Naive thymus-derived CD4-positive, alpha-beta T cell (primary cell): ENCODE measurements at regions of chr1 and their contacts with region 1.

Region 1: DNA sequence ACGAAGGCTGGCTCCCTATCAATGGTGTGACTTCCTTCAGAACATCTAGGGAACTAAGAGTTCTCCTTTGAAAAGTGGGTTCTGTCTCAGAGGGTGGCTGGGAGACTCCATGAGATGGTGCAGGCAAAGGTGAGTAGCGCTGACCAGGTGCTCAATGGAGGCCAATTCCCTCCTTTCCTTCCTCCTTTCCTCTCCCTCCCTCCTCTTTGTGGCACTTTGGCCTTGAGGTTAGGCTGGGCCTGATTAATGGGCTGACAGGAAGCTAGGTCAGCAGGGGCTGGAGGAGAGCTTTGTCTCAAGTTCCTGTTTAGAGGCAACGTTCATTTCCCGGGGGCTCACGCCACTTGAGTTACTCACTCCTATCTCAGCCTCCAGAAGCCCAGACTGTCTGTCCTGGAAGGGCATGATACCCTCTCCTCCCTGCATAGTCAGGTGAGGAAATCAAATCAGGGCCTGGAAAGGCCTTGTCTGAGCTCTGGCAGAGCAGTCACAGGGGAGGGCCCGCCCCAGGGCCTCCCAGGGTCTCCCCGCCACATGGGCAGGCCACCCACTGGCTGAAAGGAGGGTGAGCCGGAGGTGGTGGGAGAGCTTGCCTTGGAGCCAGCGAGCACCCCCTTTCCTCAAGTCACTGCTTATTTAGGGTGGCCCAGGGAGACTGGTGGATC is 58.4 kb upstream of the SSBP3 start:
- DNase-seq: no peak
- ATAC-seq: peak; percentile 23
- H3K4me3 ChIP-seq: no peak overlapping the region
- H3K4me3 Mint-ChIP-seq: no peak overlapping the region
- H3K27ac ChIP-seq: no peak overlapping the region
- H3K27ac Mint-ChIP-seq: peak overlapping the region in 2 of 9 donors; percentile 8 to 13
- H3K4me1 ChIP-seq: peaks cover 27 to 31% of the 10 kb centered on the region in 2 donors
- H3K4me1 Mint-ChIP-seq: peaks cover 8 to 51% (median 41%) of the 10 kb centered on the region in 7 donors
- H3K27me3 ChIP-seq: no peaks in the 10 kb centered on the region
- H3K27me3 Mint-ChIP-seq: peaks cover 0 to 4% (median 0%) of the 10 kb centered on the region in 5 donors

Region 2: GRCh38 chr1:54081306-54082270 is 383.0 kb before region 1 on chr1:
- CTCF ChIA-PET with region 1: no interaction called
- POLR2A ChIA-PET with region 1: no interaction called
- intact Hi-C with region 1: no loop called
- DNase-seq: peak; percentile 20 to 50 (median 40)
- ATAC-seq: peak; percentile 89
- H3K4me3 ChIP-seq: no peak overlapping the region
- H3K4me3 Mint-ChIP-seq: no peak overlapping the region
- H3K27ac ChIP-seq: no peak overlapping the region
- H3K27ac Mint-ChIP-seq: peak overlapping the region in 1 of 9 donors; percentile 53
- H3K4me1 ChIP-seq: no peaks in the 10 kb centered on the region
- H3K4me1 Mint-ChIP-seq: peaks cover 3 to 10% (median 5%) of the 10 kb centered on the region in 7 donors
- H3K27me3 ChIP-seq: no peaks in the 10 kb centered on the region
- H3K27me3 Mint-ChIP-seq: no peaks in the 10 kb centered on the region

Region 3: DNA sequence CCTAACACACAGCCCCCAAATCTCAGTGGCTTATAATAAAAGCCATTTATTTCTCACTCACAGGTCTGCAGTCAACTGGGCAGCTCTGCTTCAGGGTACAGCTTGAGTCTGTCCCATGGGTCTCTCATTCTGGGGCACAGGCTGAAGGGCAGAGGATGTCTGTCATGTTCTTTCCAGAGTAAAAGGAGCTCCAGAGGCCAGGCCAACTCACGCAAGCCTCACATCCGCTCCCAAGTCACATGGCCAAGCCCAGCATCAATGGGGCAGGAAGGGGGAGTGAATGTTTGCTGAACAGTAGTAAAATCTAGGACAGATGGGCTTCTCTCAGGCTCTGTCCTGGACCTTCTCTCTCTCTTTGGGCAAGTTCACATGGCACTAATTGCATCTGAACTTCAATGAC is 51.3 kb before region 1 on chr1:
- CTCF ChIA-PET with region 1: no interaction called
- POLR2A ChIA-PET with region 1: interaction called, 7 read pairs
- intact Hi-C with region 1: loop called in 1 of 2 experiments (anchors 5 kb)
- DNase-seq: peak in 7 of 9 donors; percentile 16 to 44 (median 34)
- ATAC-seq: peak; percentile 44
- H3K4me3 ChIP-seq: no peak overlapping the region
- H3K4me3 Mint-ChIP-seq: peak overlapping the region; percentile 58 to 84 (median 72)
- H3K27ac ChIP-seq: no peak overlapping the region
- H3K27ac Mint-ChIP-seq: peak overlapping the region; percentile 59 to 89 (median 83)
- H3K4me1 ChIP-seq: peaks cover 22 to 30% of the 10 kb centered on the region in 2 donors
- H3K4me1 Mint-ChIP-seq: peaks cover 41 to 63% (median 56%) of the 10 kb centered on the region in 7 donors
- H3K27me3 ChIP-seq: no peaks in the 10 kb centered on the region
- H3K27me3 Mint-ChIP-seq: peaks cover 0 to 14% (median 0%) of the 10 kb centered on the region in 5 donors

Region 4: DNA sequence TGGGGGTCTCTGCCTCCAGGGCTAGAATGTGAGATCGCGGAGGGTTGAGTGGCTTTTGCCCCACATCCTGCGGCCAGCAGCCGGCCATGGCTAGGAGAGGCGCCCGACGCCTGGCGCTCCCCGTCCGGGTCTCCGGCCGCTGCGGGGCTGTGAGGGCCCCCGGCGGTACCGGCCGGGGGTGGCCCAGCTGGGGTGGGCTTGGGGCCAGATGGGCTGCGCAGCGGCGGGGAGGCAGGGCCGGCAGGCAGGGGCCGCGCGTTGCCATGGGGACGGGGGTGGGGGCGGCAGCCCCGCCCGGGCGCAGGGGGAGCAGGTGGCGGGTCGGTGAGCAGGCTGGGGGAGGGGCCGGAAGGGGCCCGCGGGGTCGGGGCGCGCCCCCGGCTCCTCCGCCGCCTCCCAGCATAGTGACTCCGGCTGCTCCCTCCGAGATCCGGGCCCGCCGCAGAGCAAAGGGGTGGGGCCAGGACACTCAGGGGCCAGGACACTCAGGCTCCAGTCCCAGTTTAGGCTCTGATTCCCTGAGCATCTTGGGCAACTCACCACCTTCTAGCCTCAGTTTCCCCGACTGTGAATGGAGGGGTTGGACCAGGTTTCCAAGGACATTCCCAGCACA is 10.1 kb after region 1 on chr1:
- CTCF ChIA-PET with region 1: interaction called, 8 read pairs
- POLR2A ChIA-PET with region 1: interaction called, 45 read pairs
- intact Hi-C with region 1: loop called in 1 of 2 experiments (anchors 1 kb)
- DNase-seq: peak in 3 of 9 donors; percentile 26 to 40 (median 34)
- ATAC-seq: peak; percentile 44
- H3K4me3 ChIP-seq: peak overlapping the region; percentile 53
- H3K4me3 Mint-ChIP-seq: peak overlapping the region; percentile 65 to 89 (median 83)
- H3K27ac ChIP-seq: peak overlapping the region; percentile 64
- H3K27ac Mint-ChIP-seq: peak overlapping the region in 8 of 9 donors; percentile 80 to 98 (median 92)
- H3K4me1 ChIP-seq: peaks cover 31 to 34% of the 10 kb centered on the region in 2 donors
- H3K4me1 Mint-ChIP-seq: peaks cover 24 to 62% (median 55%) of the 10 kb centered on the region in 7 donors
- H3K27me3 ChIP-seq: no peaks in the 10 kb centered on the region
- H3K27me3 Mint-ChIP-seq: peaks cover 0 to 27% (median 0%) of the 10 kb centered on the region in 5 donors

Region 5: GRCh38 chr1:54480525-54480848 is 15.9 kb after region 1 on chr1:
- CTCF ChIA-PET with region 1: interaction called, 8 read pairs
- POLR2A ChIA-PET with region 1: interaction called, 45 read pairs
- intact Hi-C with region 1: loop called in 1 of 2 experiments (anchors 1 kb)
- DNase-seq: no peak
- ATAC-seq: peak; percentile 46
- H3K4me3 ChIP-seq: no peak overlapping the region
- H3K4me3 Mint-ChIP-seq: peak overlapping the region; percentile 6 to 81 (median 56)
- H3K27ac ChIP-seq: peak overlapping the region; percentile 58
- H3K27ac Mint-ChIP-seq: peak overlapping the region; percentile 53 to 96 (median 86)
- H3K4me1 ChIP-seq: peaks cover 41 to 42% of the 10 kb centered on the region in 2 donors
- H3K4me1 Mint-ChIP-seq: peaks cover 43 to 82% (median 75%) of the 10 kb centered on the region in 7 donors
- H3K27me3 ChIP-seq: no peaks in the 10 kb centered on the region
- H3K27me3 Mint-ChIP-seq: peaks cover 0 to 17% (median 0%) of the 10 kb centered on the region in 5 donors

Region 6: DNA sequence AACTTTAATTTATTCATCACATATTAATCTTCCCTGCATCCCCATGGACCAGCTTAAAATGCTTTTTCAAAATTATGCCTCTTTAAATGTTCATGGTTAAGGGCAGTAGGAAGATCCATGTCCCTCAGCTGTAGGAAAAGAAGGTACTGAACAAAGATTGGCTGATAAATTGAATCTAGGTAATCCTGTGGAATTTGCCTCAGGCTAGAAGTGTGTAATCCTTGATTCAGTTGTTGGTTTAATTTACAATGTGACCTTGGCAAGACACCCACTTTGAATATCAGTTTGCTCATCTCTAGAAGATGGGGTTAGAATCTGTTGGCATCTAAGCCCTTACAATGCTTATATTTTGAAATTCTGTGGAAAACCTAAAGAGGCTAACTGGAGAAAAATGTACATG is 257.1 kb after region 1 on chr1:
- CTCF ChIA-PET with region 1: no interaction called
- POLR2A ChIA-PET with region 1: no interaction called
- intact Hi-C with region 1: no loop called
- DNase-seq: no peak
- ATAC-seq: no peak
- H3K4me3 ChIP-seq: no peak overlapping the region
- H3K4me3 Mint-ChIP-seq: no peak overlapping the region
- H3K27ac ChIP-seq: no peak overlapping the region
- H3K27ac Mint-ChIP-seq: peak overlapping the region in 1 of 9 donors; percentile 43
- H3K4me1 ChIP-seq: peaks cover 3 to 4% of the 10 kb centered on the region in 2 donors
- H3K4me1 Mint-ChIP-seq: peaks cover 4 to 24% (median 20%) of the 10 kb centered on the region in 7 donors
- H3K27me3 ChIP-seq: no peaks in the 10 kb centered on the region
- H3K27me3 Mint-ChIP-seq: no peaks in the 10 kb centered on the region